Naive thymus-derived CD8-positive, alpha-beta T cell (primary cell): ENCODE measurements at regions of chr11 and their contacts with region 1.

Region 1: DNA sequence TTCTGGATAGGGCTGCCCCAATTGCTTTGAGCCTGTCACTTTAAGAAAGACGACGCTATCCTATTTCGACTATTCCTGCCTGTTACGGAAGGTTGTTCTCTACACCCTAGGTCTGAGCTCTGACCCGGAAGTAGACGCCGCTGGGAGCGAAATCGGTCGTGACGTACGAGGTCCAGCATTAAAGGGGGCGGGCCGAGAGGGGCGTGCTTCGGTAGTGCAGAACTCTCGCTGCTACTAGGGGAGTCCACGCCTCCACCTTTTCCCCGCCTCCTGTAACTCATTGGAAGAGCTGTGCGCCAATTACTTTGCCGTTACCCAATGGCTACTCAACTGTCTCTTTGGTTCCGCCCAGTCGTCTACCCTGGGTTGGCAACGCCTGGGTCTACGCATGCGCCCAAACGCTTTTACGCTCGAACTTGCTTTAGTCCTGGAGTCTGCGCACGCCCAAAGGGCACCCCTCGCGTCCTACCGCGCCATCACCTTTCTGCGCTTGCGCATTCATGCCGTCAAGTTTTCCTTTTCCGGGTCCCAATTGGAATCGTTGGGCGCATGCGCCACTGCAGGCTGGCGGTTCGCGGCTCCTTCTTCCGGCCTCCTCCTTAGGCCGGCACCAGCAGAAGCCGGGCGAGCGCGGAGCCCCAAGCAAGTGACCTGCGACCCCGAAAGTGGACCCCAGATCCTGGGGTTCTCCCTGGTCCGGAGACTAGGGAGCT is at the start of gene PCNX3:
- DNase-seq: peak; percentile 97 to 100 (median 100)
- ATAC-seq: peak; percentile 86 to 89
- H3K4me3 Mint-ChIP-seq: peak within 1 kb of the TSS; percentile 94 to 99 (median 96)
- H3K27ac Mint-ChIP-seq: peak within 1 kb of the TSS; percentile 94 to 99 (median 97)
- H3K4me1 Mint-ChIP-seq: peaks cover 22 to 55% (median 52%) of the 10 kb centered on the region in 4 donors
- H3K27me3 Mint-ChIP-seq: peaks cover 0 to 2% (median 0%) of the 10 kb centered on the region in 5 donors
- polyA plus RNA-seq, gene PCNX3: 0.96 to 6.5 (median 2.2) TPM

Region 2: DNA sequence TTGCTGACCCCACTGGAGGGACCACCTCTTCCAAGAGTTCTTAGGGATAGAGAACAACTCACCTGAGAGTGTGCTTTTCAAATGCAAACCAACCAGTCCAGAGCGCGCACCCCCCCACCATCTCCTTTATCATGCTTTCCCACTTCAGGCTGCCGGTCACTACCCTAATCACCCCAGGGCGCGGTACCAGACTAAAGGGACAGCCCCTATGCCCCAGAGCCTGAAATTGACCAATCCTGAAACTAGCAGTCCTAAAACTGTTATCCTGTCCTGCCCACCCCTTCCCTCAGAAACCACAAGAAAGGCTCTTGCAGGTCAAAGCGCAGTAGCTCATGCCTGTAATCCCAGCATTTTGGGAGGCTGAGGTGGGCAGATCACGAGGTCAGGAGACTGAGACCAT is 155.8 kb before region 1 on chr11:
- POLR2A ChIA-PET with region 1: no interaction called
- DNase-seq: no peak
- ATAC-seq: no peak
- H3K4me3 Mint-ChIP-seq: no peak overlapping the region
- H3K27ac Mint-ChIP-seq: no peak overlapping the region
- H3K4me1 Mint-ChIP-seq: peaks cover 3 to 23% (median 16%) of the 10 kb centered on the region in 4 donors
- H3K27me3 Mint-ChIP-seq: no peaks in the 10 kb centered on the region

Region 3: DNA sequence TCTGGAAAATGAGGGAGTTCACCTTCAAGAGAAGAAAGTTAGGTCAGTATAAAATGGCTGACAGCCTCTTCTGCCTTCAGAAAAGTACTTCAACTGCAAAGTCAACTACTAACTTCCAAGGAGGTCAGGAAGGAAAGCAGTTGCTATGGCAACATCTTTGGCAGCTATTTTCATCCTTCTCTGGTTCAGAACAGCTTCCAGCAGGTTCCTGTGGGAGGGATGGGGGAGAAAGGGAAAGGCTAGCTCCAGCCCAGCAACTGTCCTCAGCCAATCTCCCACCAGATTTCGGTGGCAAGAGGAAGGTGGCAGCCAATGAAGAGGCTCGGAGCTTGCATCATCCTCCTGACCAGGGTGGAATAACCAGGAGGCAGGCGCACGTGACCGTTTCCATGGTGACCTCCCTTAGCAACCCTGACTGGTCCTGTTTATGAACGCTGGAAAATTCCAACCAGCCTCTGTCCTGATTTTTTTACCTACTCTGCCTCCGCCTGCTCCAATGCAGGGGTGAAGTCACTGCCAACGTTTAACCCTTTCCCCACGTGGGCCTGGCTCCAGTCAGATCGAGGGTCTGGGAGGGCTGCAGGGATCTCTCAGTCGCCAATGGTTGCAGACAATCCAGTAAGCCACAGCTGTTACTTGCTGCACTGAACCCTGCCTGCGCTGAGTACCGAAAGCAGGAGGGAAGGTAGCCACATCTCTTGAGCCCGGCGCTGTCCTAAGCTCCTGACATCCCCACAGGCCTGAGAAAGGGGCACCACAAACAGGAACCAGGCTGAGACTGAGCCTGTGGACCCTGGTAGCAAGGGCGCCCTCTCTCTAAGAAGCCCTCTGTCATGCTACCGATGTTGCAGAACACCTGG is 127.7 kb before region 1 on chr11:
- POLR2A ChIA-PET with region 1: no interaction called
- DNase-seq: peak in 1 of 10 donors; percentile 53
- ATAC-seq: peak; percentile 58 to 70
- H3K4me3 Mint-ChIP-seq: peak overlapping the region in 7 of 10 donors; percentile 11 to 49 (median 39)
- H3K27ac Mint-ChIP-seq: peak overlapping the region in 8 of 10 donors; percentile 37 to 88 (median 65)
- H3K4me1 Mint-ChIP-seq: peaks cover 12 to 37% (median 30%) of the 10 kb centered on the region in 4 donors
- H3K27me3 Mint-ChIP-seq: no peaks in the 10 kb centered on the region

Region 4: GRCh38 chr11:65662799-65663638 is 47.6 kb after region 1 on chr11 and contains the start of gene RELA:
- POLR2A ChIA-PET with region 1: interaction called, 1,068 read pairs
- DNase-seq: peak; percentile 85 to 95 (median 88)
- ATAC-seq: peak; percentile 80 to 84
- H3K4me3 Mint-ChIP-seq: peak within 1 kb of the TSS; percentile 86 to 93 (median 88)
- H3K27ac Mint-ChIP-seq: peak within 1 kb of the TSS; percentile 91 to 98 (median 95)
- H3K4me1 Mint-ChIP-seq: peaks cover 16 to 47% (median 36%) of the 10 kb centered on the region in 4 donors
- H3K27me3 Mint-ChIP-seq: no peaks in the 10 kb centered on the region
- polyA plus RNA-seq, gene RELA: 38.4 to 69.8 (median 56.6) TPM

Region 5: GRCh38 chr11:65685981-65686380 is 70.6 kb after region 1 on chr11:
- POLR2A ChIA-PET with region 1: no interaction called
- DNase-seq: no peak
- ATAC-seq: no peak
- H3K4me3 Mint-ChIP-seq: no peak overlapping the region
- H3K27ac Mint-ChIP-seq: no peak overlapping the region
- H3K4me1 Mint-ChIP-seq: no peaks in the 10 kb centered on the region
- H3K27me3 Mint-ChIP-seq: peaks cover 0 to 4% (median 0%) of the 10 kb centered on the region in 5 donors